ENCODE measurements at regions of chr3 and their contacts with region 1.

Region 1: DNA sequence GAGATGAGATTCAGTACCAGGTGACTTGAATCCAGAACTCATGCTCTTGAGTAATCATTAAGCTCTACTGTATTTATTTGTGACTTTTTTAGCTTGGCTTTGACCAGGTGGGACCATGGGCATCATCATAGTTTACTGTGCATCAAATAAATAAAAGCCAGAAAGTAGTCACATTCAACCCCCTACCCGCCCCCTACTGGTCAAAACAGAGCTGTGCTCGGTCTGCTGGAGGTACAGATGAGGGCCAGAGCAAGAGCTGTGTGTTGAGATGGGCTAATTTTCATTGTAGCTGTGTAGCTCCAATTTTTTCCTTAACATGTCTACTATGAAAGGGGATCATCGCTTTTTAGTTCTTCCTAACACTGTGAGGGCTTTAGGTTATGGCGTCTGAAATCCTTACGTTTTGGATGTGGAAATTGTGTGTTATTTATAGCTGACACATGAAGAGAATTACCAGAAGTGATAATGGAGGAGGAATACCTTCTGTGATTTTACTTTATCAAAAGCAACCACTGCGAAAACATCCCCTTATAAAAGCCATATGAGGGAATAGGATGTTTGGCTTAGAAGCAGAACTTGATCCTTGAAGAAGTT is 375.1 kb downstream of the PTPRG start:
- DNase-seq: no peak
- ATAC-seq: no peak

Region 2: GRCh38 chr3:61200270-61200669 is 736.2 kb before region 1 on chr3:
- intact Hi-C with region 1: no loop called
- DNase-seq: no peak
- ATAC-seq: no peak

Region 3: GRCh38 chr3:61966200-61966599 is 29.8 kb after region 1 on chr3:
- intact Hi-C with region 1: loop called (anchors 2 kb)
- DNase-seq: no peak
- ATAC-seq: no peak

Region 4: DNA sequence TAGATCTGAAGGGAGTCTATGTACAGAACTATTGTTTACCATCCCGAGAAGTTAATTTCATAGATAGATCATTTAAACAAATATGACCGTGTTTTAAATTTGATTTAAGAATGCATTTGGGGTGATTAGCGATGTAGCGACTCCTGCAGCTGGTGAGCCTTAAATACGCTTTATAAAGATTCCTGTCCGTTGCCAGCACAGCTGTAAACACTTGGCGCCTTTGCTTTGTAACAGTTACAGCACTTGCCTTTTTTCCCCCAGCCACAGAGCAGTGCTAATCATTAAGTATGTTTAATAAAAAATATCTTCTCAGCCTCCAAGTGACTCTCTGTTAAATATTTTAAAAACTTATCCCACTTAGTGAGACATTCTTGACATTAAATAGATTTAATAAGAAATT is 103.1 kb after region 1 on chr3:
- intact Hi-C with region 1: no loop called
- DNase-seq: no peak
- ATAC-seq: no peak

Region 5: DNA sequence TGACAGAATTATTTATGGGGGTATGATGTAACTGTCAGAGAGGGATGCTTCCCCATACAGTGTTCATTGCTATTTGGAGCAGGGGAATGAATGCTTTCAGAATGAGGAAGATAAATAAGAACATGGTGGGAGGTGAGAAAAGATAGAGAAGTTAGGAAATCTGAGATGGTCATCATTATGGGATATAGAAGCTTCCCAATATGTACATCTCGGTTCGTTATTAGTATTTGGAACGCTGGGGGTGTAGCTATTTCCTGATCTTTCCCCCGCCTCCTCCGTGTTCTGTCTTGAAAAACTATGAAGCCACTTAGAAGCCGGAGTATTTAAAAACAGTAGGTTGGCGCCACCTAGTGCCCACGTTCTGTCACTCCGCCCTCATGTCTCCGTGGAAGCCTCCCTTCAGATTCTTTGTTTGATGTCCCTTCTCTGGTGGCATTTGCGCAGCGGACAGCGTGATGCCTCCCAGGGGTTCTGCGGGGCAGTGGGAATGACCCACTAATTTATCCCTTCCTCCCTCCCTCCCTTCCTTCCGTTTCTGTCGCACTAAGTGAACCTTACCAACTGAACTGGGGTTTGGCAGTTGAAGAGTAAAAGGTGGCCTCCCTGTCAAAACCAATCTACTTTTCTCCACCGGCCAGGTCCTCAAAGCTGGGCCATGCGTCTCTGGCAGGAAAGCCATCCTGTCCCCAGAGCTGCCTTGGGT is 252.4 kb after region 1 on chr3:
- intact Hi-C with region 1: loop called (anchors 10 kb)
- DNase-seq: peak; percentile 84
- ATAC-seq: peak; percentile 73

Region 6: GRCh38 chr3:62277450-62277849 is 341.0 kb after region 1 on chr3:
- intact Hi-C with region 1: no loop called
- DNase-seq: no peak
- ATAC-seq: no peak

Measured in Right ventricle myocardium superior (tissue), 1 donor.